ENCODE measurements at regions of chr19 and their contacts with region 1.

Region 1: DNA sequence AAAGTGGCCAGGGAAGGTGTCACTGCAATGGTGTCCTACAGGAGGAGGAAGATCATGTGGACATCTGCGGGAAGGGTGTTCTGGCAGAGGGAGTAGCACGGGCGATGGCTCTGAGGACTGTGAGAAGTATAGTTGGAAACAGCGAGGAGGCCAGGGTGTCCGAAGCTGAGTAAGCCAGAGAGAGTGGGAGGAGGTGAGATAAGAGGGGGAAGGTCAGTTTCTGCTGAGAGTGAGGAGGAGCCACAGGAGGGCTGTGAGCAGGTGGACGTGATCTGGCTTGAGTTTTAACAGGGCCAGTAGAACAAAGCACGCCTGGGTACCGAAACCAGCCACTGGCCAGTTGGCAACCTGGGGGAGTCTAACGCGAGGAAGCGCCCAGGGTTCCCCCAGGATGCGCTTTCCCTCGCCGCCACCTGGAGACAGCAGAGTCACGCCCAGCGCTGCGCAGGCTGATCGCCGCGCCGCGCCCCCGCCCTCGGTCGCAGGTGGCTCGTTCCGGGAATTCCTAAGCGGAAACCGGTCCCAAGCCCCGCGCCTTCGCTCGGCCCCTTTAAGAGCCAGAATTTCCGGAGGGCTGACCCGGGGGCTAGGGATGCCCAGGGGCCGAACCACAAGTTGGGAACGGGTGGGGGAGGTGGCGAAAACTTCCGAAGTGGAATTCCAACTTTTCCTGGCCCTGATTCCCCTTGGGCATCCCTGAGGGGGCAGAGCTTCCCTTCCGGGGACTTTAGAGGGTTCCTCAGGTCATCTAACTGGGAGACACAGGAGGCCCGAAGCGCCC is 1.1 kb upstream of the LSR start:
- DNase-seq: peak in 4 of 9 donors; percentile 33 to 52 (median 39)
- ATAC-seq: peak; percentile 63
- H3K4me3 ChIP-seq: peak overlapping the region; percentile 81
- H3K4me3 Mint-ChIP-seq: peak overlapping the region; percentile 87 to 92 (median 92)
- H3K27ac ChIP-seq: peak overlapping the region; percentile 63
- H3K27ac Mint-ChIP-seq: peak overlapping the region; percentile 64 to 95 (median 90)
- H3K4me1 ChIP-seq: peaks cover 0 to 4% of the 10 kb centered on the region in 2 donors
- H3K4me1 Mint-ChIP-seq: peaks cover 18 to 41% (median 33%) of the 10 kb centered on the region in 7 donors
- H3K27me3 ChIP-seq: no peaks in the 10 kb centered on the region
- H3K27me3 Mint-ChIP-seq: peaks cover 0 to 66% (median 5%) of the 10 kb centered on the region in 5 donors

Region 2: DNA sequence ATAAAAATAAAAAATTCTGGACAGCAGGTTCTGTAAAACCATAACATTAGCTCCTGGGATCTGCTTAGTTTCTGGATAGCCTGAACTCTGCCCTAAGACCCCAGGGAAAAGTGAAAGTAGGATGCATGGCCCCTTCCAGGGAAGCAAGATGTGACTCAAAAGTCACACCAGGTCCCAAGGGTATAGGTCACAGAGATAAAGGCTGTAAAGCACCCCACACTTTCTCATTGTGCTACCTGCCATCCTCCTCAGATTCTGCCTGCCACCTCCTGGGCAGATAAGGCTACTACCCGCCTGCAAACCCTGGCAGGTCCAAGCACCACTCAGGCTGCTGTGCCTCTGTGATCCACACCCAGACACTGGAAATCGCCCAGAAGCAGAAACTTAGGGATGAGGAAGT is 220.9 kb after region 1 on chr19:
- CTCF ChIA-PET with region 1: no interaction called
- POLR2A ChIA-PET with region 1: no interaction called
- intact Hi-C with region 1: loop called in 1 of 2 experiments (anchors 1 kb)
- DNase-seq: peak; percentile 30 to 66 (median 57)
- ATAC-seq: peak; percentile 99
- H3K4me3 ChIP-seq: no peak overlapping the region
- H3K4me3 Mint-ChIP-seq: no peak overlapping the region
- H3K27ac ChIP-seq: no peak overlapping the region
- H3K27ac Mint-ChIP-seq: no peak overlapping the region
- H3K4me1 ChIP-seq: peaks cover 0 to 10% of the 10 kb centered on the region in 2 donors
- H3K4me1 Mint-ChIP-seq: peaks cover 4 to 9% (median 7%) of the 10 kb centered on the region in 7 donors
- H3K27me3 ChIP-seq: no peaks in the 10 kb centered on the region
- H3K27me3 Mint-ChIP-seq: peaks cover 0 to 8% (median 0%) of the 10 kb centered on the region in 5 donors

Region 3: DNA sequence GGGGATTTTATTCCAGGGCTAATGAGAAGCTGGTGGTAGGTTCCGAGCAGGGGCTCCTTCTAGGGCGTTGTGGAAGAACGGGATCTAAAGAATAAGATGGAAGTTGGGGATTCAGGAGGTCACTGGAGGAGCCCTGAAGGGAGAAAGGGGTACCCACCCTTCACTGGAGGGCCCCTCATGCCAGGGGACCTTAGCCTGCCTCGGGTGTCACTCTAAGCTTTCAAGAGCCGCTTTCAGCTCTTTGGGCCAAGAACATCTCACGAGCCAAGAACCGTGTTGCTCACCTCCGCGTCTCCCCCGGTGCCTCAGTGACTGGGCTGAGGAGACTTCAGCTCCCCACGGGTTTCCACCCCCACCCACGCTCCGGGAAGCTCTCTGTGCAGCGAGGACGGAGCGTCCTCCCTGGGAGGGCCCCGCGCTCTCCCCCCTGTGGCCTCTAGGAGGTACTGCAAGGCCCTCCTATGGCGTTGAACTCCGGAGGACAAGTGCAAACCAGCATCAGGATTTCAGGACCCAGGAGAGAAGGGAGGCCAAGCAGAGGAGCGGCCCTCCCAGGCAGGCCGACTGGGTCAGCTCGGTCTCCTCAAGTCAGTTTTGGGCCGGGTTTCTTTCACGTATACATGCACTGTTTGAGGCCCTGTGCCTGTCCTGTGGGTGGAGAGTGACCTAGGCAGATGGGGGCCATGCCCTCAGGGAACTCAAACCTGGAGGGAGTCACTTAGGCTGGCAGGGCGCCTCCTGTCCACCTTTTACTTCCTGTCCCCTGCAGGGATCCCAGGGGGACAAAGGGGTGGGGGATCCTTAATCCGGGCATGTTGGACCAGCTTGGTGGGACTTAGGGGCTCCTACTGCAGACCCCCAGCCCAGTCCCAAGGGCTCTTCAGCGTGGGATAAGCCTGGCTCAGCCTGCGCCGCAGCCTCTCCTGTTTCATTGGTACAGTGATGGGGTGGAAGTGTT is 247.7 kb after region 1 on chr19:
- CTCF ChIA-PET with region 1: no interaction called
- POLR2A ChIA-PET with region 1: no interaction called
- intact Hi-C with region 1: loop called in 1 of 2 experiments (anchors 1 kb)
- DNase-seq: peak; percentile 38 to 81 (median 60)
- ATAC-seq: peak; percentile 99
- H3K4me3 ChIP-seq: no peak overlapping the region
- H3K4me3 Mint-ChIP-seq: peak overlapping the region in 7 of 10 donors; percentile 17 to 62 (median 45)
- H3K27ac ChIP-seq: no peak overlapping the region
- H3K27ac Mint-ChIP-seq: peak overlapping the region in 3 of 9 donors; percentile 22 to 62 (median 47)
- H3K4me1 ChIP-seq: no peaks in the 10 kb centered on the region
- H3K4me1 Mint-ChIP-seq: peaks cover 0 to 9% (median 6%) of the 10 kb centered on the region in 7 donors
- H3K27me3 ChIP-seq: no peaks in the 10 kb centered on the region
- H3K27me3 Mint-ChIP-seq: peaks cover 0 to 12% (median 0%) of the 10 kb centered on the region in 5 donors